Activated T-helper 2 cell treated with anti-CD3 and anti-CD28 coated beads, Interferon-gamma antibody, Interleukin-2, Interleukin-4, amounts not matched to agents 10 μg/mL and 5 μg/mL and 100 μg/mL, durations not matched to agents 14 hours and 24 hours and 36 hours (primary cell): ENCODE measurements at regions of chr6 and their contacts with region 1.

Region 1: GRCh38 chr6:135183532-135184440 is 2.7 kb downstream of the MYB start:
- DNase-seq: peak; percentile 79
- H3K4me3 Mint-ChIP-seq: peak overlapping the region; percentile 97
- H3K27ac Mint-ChIP-seq: peak overlapping the region; percentile 94
- H3K4me1 Mint-ChIP-seq: peaks cover 41% of the 10 kb centered on the region
- H3K27me3 Mint-ChIP-seq: no peaks in the 10 kb centered on the region

Region 2: GRCh38 chr6:134707342-134708031 is 476.3 kb before region 1 on chr6:
- intact Hi-C with region 1: no loop called
- DNase-seq: no peak
- H3K4me3 Mint-ChIP-seq: no peak overlapping the region
- H3K27ac Mint-ChIP-seq: no peak overlapping the region
- H3K4me1 Mint-ChIP-seq: no peaks in the 10 kb centered on the region
- H3K27me3 Mint-ChIP-seq: peaks cover 34% of the 10 kb centered on the region

Region 3: GRCh38 chr6:134979142-134979541 is 204.6 kb before region 1 on chr6:
- intact Hi-C with region 1: loop called (anchors 2 kb)
- DNase-seq: peak; percentile 55
- H3K4me3 Mint-ChIP-seq: peak overlapping the region; percentile 57
- H3K27ac Mint-ChIP-seq: peak overlapping the region; percentile 78
- H3K4me1 Mint-ChIP-seq: peaks cover 52% of the 10 kb centered on the region
- H3K27me3 Mint-ChIP-seq: no peaks in the 10 kb centered on the region

Region 4: DNA sequence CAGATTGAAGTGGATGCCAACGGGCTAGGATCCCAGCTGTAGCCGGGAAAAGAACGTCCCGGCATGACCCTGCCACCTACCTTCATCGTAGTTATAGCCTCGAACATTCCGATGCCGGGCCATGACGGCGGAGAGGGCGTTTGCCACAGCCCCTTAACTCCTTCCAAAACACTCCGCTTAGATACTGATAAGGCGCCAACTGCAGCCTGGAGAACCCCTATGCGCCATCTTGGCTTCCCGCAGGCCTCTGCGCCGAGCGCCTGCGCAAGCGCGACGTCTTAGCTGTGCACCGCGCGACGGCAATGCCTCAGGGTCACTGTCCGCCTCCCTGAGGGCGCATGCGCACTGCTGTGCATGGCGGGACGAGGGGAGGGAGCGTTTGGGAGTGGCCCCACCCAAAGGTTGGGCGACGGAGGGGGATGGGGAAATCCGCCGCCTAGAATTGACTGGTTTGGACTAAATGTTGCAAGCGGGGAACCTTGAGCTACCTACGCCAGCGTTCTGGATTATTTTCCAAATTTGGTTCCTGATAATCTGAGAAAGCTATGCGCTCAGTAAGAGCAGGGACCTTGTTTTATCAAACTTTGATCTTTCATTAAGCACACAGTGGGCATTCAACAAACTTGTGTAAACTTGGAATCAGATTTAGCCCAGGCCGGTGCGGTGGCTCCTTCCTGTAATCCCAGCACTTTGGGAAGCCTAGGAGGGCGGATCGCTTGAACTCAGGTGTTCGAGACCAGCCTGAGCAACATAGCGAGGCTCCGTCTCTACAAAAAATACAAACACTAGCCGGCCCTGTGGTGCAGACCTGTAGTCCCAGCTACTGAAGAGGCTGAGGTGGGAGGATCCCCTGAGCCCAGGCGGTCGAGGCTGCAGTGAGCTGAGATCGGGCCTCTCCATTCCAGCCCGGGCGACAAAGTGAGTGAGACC is 129.0 kb before region 1 on chr6 and contains the start of gene HBS1L:
- intact Hi-C with region 1: loop called (anchors 1 kb)
- DNase-seq: peak; percentile 98
- H3K4me3 Mint-ChIP-seq: peak within 1 kb of the TSS; percentile 97
- H3K27ac Mint-ChIP-seq: peak within 1 kb of the TSS; percentile 97
- H3K4me1 Mint-ChIP-seq: peaks cover 36% of the 10 kb centered on the region
- H3K27me3 Mint-ChIP-seq: no peaks in the 10 kb centered on the region
- total RNA-seq, gene HBS1L: 99.2 and 102 TPM in 2 replicates

Region 5: DNA sequence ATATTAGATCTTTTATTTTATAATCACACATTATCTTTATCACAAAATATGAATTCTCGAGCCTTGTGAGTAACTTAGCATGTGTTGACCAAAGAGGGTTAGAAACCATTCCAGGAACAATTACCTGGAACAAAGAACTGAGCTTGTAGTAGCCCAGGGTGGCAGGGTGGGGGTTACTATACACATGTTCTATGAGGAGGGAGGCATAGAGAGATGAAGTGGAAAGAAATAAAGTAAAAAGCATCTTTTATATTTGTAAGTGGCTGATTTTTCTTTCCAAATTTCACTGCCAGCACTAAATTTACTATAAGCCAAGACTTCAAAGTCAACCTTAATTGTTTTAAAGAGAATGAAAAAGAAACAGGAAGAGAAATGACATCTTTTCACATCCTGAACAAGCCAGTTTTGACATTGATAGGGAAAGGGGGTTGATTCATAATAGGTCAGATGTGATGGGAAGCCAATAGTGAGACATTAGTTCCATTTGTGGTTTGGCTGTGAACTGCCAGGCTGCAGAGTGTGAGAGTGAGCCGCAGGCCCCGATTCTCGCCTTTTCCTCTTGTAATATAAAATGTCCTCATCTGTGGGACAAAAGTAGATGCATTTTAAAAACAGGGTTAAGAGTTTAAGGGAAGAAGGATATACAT is 55.4 kb before region 1 on chr6:
- intact Hi-C with region 1: no loop called
- DNase-seq: peak; percentile 55
- H3K4me3 Mint-ChIP-seq: peak overlapping the region; percentile 57
- H3K27ac Mint-ChIP-seq: peak overlapping the region; percentile 95
- H3K4me1 Mint-ChIP-seq: peaks cover 47% of the 10 kb centered on the region
- H3K27me3 Mint-ChIP-seq: no peaks in the 10 kb centered on the region

Region 6: DNA sequence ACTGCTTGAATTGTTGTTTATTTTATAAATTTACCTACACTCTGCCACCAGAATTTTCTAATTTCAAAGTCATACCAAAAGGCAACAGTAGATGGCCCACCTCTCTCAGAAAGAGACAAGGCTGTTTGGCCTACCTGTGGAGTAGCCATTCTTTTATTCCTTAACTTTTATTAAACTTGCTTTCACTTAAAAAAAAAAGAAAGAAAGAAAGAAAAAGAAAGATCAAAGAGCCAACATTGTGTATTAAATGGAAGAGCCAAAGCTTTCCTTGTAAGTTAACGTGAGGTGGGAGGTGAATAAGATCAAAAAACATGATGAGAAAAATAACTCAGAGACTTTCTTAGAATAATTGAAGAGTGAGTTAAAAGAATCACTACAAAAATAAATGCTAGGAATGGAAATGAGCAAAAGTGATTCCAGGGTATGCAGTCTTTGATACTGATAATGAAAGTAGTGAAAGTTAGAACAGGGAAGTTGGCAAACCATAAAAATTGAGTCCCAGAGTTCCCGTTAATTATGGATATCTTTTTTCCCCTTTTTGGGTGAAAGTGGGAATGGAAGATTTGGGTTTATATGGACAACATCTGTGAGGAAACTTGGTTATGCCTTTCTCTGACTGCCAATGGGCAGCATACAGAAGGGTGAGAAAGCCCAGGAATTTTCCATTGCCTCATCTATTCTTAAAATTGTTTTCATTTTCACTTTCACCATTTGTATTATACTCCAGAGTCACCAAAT is 38.6 kb before region 1 on chr6:
- intact Hi-C with region 1: loop called (anchors 1 kb)
- DNase-seq: no peak
- H3K4me3 Mint-ChIP-seq: peak overlapping the region; percentile 55
- H3K27ac Mint-ChIP-seq: peak overlapping the region; percentile 89
- H3K4me1 Mint-ChIP-seq: peaks cover 64% of the 10 kb centered on the region
- H3K27me3 Mint-ChIP-seq: no peaks in the 10 kb centered on the region

Region 7: DNA sequence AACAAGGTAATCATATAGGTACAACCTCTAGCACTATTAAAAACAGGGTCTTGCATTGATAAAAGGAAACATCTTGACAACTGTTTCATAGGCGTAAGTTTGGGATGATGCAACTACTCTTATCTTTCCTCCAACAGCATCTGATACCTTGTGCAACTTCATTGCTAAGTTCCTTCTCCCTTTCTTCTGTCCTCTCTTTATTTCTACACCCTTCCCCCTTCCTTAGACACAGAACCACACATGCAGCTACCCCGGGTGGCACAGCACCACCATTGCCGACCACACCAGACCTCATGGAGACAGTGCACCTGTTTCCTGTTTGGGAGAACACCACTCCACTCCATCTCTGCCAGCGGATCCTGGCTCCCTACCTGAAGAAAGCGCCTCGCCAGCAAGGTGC is 11.7 kb after region 1 on chr6:
- intact Hi-C with region 1: loop called (anchors 2 kb)
- DNase-seq: no peak
- H3K4me3 Mint-ChIP-seq: no peak overlapping the region
- H3K27ac Mint-ChIP-seq: peak overlapping the region; percentile 63
- H3K4me1 Mint-ChIP-seq: peaks cover 56% of the 10 kb centered on the region
- H3K27me3 Mint-ChIP-seq: no peaks in the 10 kb centered on the region

Region 8: GRCh38 chr6:135640449-135641111 is 456.8 kb after region 1 on chr6:
- intact Hi-C with region 1: loop called (anchors 10 kb)
- DNase-seq: no peak
- H3K4me3 Mint-ChIP-seq: peak overlapping the region; percentile 64
- H3K27ac Mint-ChIP-seq: peak overlapping the region; percentile 94
- H3K4me1 Mint-ChIP-seq: peaks cover 63% of the 10 kb centered on the region
- H3K27me3 Mint-ChIP-seq: no peaks in the 10 kb centered on the region